OCI-LY7 (cell line): ENCODE measurements at regions of chr5 and their contacts with region 1.

Region 1: DNA sequence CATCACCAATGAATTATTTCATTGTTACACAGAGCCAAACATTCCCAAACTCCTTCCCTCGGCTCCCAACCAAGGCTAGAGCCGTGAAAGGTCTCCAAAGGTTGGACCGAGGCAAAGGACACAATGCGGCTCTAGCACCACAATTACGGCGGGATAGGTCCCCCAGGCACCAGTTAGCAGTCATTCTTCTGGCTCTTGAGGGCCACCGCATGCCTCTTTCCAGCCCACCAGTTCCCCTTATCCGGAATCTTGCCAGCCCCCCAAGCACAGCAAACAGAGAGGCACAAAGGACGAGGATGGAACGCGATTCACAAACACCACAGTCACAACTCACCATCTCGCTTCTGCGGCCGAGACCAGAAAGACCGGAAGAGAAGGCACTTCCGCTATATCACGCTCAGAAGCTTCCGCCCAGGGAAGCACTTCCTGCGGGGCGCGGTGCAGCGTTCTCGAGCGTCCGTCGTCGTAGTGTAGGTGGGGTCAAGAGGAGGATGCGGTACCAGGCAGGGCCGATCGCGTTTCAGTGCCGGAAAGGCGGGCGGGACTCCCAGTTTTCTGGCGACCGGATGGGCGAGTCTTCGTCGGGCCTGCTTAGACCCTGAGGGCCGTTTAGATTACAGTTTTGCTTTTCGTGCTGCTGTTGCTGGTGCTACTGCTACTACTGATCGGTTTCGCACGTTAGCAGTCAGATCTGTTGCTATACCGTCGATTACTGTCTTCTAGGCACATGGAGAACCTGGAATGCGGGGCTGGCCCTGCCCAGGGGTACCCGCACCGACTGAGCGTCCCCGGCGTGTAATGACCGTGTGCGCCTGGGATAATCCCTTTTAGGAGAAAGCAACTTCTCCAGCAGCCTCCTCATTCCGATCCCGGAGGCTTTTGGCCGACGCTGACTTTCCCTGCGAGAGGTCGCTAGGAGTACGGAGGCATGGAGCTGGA is at the start of gene RPL37:
- DNase-seq: peak; percentile 97
- H3K4me3 ChIP-seq: peak within 1 kb of the TSS; percentile 88
- H3K27ac ChIP-seq: peak within 1 kb of the TSS; percentile 79
- H3K4me1 ChIP-seq: peaks cover 37% of the 10 kb centered on the region
- CTCF ChIP-seq: no peak
- total RNA-seq, gene RPL37: 2,743 and 2,779 TPM in 2 replicates

Region 2: GRCh38 chr5:40755407-40756365 is 79.4 kb before region 1 on chr5 and contains the start of gene TTC33:
- CTCF ChIA-PET with region 1: no interaction called
- POLR2A ChIA-PET with region 1: no interaction called
- intact Hi-C with region 1: loop called (anchors 2 kb)
- DNase-seq: peak; percentile 92
- H3K4me3 ChIP-seq: peak within 1 kb of the TSS; percentile 75
- H3K27ac ChIP-seq: peak within 1 kb of the TSS; percentile 66
- H3K4me1 ChIP-seq: peaks cover 16% of the 10 kb centered on the region
- CTCF ChIP-seq: peak; percentile 84
- total RNA-seq, gene TTC33: 15.9 and 22.9 TPM in 2 replicates

Region 3: DNA sequence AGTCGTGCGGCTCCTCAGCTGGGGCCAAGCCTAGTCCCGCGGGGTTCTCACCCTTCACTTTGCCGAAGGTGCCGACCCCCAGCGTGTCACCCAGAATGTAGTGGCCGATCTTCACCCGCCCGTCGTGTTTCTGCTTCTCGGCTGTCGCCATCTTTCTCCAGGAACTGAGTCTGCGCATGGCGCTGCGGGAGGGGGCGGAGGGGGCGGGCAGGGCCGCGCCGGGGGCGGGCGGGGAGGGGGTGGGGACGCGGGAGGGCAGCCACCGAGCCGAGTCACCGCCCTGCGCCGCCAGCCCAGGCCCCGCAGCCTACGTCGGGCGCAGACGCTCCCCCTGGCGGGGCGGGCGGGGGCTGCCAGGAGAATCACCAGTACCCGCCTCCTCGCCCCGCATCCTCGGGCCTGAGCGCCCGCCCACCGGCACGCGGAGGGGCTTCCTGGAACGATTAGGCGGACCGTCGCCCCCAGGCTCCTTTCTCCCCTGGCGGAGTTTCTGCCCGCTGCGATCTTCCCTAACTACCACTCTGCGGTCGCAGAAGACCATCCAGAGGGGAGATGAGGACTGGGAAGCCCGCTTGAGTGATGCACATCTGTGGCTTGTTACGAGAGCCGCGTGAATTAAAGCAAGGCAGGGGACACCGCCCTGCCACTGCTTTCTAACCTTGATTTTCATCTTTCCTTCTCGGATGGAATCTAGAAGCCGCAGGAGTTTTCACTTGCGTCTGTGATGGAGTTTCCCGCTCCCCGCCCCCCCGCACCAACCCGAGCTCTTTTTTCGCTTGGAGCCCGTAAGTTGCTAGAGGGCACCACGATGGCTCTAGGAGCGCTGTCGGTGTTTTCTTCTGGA is 36.9 kb before region 1 on chr5 and contains the start of gene PRKAA1:
- CTCF ChIA-PET with region 1: no interaction called
- POLR2A ChIA-PET with region 1: interaction called, 6 read pairs
- intact Hi-C with region 1: loop called (anchors 1 kb)
- DNase-seq: peak; percentile 89
- H3K4me3 ChIP-seq: peak within 1 kb of the TSS; percentile 91
- H3K27ac ChIP-seq: peak within 1 kb of the TSS; percentile 79
- H3K4me1 ChIP-seq: peaks cover 17% of the 10 kb centered on the region
- CTCF ChIP-seq: peak; percentile 36; the same call in 1 of the 2 replicates
- total RNA-seq, gene PRKAA1: 17.9 and 30.0 TPM in 2 replicates

Region 4: DNA sequence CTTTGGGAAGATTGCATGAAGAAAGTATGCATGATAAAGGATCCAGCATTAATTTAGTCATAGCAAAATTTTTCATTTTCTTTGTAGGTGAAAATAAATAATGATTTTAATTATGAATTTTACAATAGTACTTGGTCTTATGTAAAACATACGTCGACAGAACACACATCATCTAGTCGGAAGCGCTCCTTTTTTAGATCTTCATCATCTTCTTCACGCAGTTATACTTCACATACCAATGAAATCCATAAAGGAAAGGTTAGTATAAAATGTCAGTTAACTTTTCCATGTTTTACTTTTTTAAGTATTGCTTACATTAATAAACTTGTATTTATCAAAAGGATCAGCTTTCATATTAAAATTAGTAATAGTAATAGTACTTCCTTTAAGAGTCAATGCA is 110.0 kb after region 1 on chr5:
- CTCF ChIA-PET with region 1: no interaction called
- POLR2A ChIA-PET with region 1: no interaction called
- intact Hi-C with region 1: no loop called
- DNase-seq: no peak
- H3K4me3 ChIP-seq: no peak overlapping the region
- H3K27ac ChIP-seq: no peak overlapping the region
- H3K4me1 ChIP-seq: no peaks in the 10 kb centered on the region
- CTCF ChIP-seq: no peak

Region 5: GRCh38 chr5:41903892-41904799 is 1069.0 kb after region 1 on chr5 and contains the start of gene RIMOC1:
- CTCF ChIA-PET with region 1: no interaction called
- POLR2A ChIA-PET with region 1: interaction called, 3 read pairs
- intact Hi-C with region 1: loop called (anchors 5 kb)
- DNase-seq: peak; percentile 98
- H3K4me3 ChIP-seq: peak within 1 kb of the TSS; percentile 82
- H3K27ac ChIP-seq: peak within 1 kb of the TSS; percentile 39
- H3K4me1 ChIP-seq: peaks cover 22% of the 10 kb centered on the region
- CTCF ChIP-seq: no peak
- total RNA-seq, gene RIMOC1: 7.9 and 8.5 TPM in 2 replicates